ENCODE measurements at regions of chr21 and their contacts with region 1.

Region 1: DNA sequence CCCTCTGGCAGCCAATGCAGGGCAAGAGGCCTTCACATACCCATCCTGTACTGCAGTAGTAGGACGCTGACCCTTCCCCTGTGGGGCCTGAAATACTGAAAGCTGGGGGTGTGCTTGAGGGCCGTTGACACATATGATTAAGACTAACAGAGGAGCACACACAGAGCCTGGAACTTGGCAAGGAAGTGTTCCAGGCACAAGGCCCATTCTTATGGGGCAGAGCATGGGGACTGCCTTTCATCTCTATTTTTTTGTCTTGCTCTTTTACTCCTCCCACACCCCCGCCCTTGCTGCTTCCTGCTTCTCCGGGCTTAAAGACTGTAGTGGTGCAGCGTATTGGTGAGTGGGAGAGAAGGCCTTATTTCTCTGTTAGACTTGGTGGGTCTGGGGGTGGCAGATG is 137.4 kb downstream of the BACH1 start:
- DNase-seq: peak; percentile 65
- H3K4me3 Mint-ChIP-seq: peak overlapping the region; percentile 64
- H3K27ac Mint-ChIP-seq: peak overlapping the region; percentile 80
- H3K4me1 Mint-ChIP-seq: peaks cover 36% of the 10 kb centered on the region
- H3K27me3 Mint-ChIP-seq: no peaks in the 10 kb centered on the region

Region 2: DNA sequence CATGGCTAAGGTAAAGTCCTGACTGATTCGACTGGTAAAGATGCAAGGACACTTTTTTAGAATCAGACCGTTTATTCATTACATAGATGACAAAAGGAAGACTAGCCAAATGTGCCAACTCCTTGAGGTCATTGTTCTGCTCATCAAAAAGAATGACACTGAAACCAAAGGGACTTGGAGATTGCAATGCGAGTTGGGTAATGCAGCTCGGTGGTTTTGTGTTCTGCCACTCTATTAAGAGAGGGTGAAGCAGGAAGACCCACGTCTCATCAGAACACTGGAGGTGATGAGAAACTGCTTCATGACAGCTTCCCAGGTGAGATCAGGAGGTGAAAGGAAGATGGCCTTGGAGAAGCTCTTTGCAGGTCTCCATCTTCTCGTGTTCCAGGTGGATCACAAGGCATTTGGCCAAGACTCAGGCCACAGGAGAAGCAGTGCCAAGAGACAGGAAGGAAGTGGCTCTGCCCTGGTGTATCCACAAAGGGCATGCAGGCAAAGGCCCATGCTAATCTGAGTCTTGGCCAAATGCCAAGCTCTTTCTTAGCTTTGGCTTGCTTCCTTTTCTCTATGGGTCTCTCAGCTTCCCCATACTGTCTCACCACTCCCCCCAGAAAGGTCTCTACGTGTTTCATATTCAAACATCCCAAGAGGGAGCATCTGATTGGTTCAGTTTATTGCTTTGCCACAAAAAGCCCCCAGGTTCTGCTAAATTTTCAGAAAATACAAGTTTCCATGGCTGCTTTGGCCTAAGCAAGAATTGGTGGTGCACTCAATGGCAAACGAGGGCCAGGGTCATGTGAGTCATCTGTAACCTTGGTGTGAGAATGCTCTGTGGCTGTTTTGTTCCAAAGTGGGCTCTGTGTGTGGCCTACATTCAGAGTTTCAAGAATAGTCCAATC is 357.0 kb before region 1 on chr21:
- CTCF ChIA-PET with region 1: no interaction called
- POLR2A ChIA-PET with region 1: no interaction called
- intact Hi-C with region 1: loop called (anchors 5 kb)
- DNase-seq: peak; percentile 66
- H3K4me3 Mint-ChIP-seq: peak overlapping the region; percentile 84
- H3K27ac Mint-ChIP-seq: peak overlapping the region; percentile 81
- H3K4me1 Mint-ChIP-seq: peaks cover 58% of the 10 kb centered on the region
- H3K27me3 Mint-ChIP-seq: no peaks in the 10 kb centered on the region

Region 3: DNA sequence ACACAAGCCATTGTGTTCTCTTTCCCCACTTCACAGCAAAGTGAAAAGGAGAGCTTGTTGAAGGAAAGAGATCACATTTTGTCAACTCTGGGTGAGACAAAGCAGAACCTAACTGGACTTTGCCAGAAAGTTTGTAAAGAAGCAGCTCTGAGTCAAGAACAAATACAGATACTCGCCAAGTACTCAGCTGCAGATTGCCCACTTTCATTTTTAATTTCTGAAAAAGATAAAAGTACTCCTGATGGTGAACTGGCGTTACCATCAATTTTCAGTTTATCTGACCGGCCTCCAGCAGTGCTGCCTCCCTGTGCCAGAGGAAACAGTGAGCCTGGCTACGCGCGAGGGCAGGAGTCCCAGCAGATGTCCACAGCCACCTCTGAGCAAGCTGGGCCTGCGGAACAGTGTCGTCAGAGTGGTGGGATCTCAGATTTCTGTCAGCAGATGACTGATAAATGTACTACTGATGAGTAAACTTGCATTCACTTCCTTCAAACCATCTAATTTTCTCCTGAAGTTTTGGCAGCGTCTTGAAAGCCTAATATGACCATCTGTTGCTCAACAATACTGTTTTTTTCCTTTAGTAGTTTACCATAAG is 93.7 kb before region 1 on chr21:
- CTCF ChIA-PET with region 1: no interaction called
- POLR2A ChIA-PET with region 1: no interaction called
- intact Hi-C with region 1: loop called (anchors 1 kb)
- DNase-seq: peak; percentile 84
- H3K4me3 Mint-ChIP-seq: peak overlapping the region; percentile 53
- H3K27ac Mint-ChIP-seq: peak overlapping the region; percentile 84
- H3K4me1 Mint-ChIP-seq: peaks cover 34% of the 10 kb centered on the region
- H3K27me3 Mint-ChIP-seq: no peaks in the 10 kb centered on the region

Region 4: GRCh38 chr21:29449306-29449950 is 13.3 kb after region 1 on chr21:
- CTCF ChIA-PET with region 1: no interaction called
- POLR2A ChIA-PET with region 1: no interaction called
- intact Hi-C with region 1: loop called (anchors 1 kb)
- DNase-seq: no peak
- H3K4me3 Mint-ChIP-seq: peak overlapping the region; percentile 6
- H3K27ac Mint-ChIP-seq: peak overlapping the region; percentile 90
- H3K4me1 Mint-ChIP-seq: peaks cover 14% of the 10 kb centered on the region
- H3K27me3 Mint-ChIP-seq: no peaks in the 10 kb centered on the region

Region 5: GRCh38 chr21:29656504-29657239 is 220.5 kb after region 1 on chr21:
- CTCF ChIA-PET with region 1: interaction called, 4 read pairs
- POLR2A ChIA-PET with region 1: no interaction called
- intact Hi-C with region 1: loop called (anchors 10 kb)
- DNase-seq: peak; percentile 10
- H3K4me3 Mint-ChIP-seq: peak overlapping the region; percentile 39
- H3K27ac Mint-ChIP-seq: peak overlapping the region; percentile 76
- H3K4me1 Mint-ChIP-seq: peaks cover 14% of the 10 kb centered on the region
- H3K27me3 Mint-ChIP-seq: peaks cover 4% of the 10 kb centered on the region